Activated T-helper 2 cell treated with anti-CD3 and anti-CD28 coated beads, Interferon-gamma antibody, Interleukin-2, Interleukin-4, amounts not matched to agents 10 μg/mL and 5 μg/mL and 100 μg/mL, durations not matched to agents 14 hours and 24 hours and 36 hours (primary cell): ENCODE measurements at regions of chr10 and their contacts with region 1.

Region 1: DNA sequence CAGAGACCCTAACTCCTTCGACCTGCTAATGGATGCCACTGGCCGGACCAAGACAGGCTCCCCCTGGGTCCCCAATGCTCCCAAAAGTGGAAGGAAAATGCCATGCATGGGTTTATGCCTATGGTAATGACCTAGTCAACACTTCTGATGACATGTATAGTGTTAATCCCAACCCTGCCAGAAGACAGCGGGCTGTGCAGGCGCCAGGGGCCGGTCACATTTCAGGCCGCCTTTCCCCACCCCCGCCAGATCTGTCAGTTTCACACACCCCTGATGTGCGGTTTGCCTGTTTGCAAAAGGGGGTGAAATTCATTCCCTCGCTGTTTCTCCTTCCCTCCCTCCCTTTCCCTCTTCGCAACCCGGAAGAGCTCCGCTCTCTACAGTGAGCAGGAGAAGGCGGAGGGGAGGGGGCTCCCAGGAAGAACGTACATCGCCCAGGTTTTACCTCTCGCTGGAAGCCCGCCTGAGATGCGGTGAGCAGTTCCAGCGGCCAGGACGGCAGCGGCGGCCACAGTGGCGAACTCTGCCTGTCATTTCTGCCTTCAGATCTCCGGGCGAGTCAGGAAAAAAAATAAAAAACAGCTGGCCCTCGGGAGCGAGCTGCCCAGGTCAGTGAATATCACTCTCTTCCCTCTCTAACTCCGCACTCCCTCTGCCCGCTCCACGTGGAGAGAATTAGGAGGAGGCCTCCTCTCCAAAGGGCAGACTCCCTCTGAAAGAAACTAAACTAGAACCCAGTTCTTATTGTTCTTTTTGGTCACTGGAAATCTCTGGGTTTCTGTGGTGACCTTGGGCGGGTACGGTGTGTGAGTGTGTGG is 9.4 kb upstream of the GATA3 start:
- DNase-seq: no peak
- H3K4me3 Mint-ChIP-seq: peak overlapping the region; percentile 81
- H3K27ac Mint-ChIP-seq: peak overlapping the region; percentile 40
- H3K4me1 Mint-ChIP-seq: peaks cover 58% of the 10 kb centered on the region
- H3K27me3 Mint-ChIP-seq: peaks cover 41% of the 10 kb centered on the region

Region 2: DNA sequence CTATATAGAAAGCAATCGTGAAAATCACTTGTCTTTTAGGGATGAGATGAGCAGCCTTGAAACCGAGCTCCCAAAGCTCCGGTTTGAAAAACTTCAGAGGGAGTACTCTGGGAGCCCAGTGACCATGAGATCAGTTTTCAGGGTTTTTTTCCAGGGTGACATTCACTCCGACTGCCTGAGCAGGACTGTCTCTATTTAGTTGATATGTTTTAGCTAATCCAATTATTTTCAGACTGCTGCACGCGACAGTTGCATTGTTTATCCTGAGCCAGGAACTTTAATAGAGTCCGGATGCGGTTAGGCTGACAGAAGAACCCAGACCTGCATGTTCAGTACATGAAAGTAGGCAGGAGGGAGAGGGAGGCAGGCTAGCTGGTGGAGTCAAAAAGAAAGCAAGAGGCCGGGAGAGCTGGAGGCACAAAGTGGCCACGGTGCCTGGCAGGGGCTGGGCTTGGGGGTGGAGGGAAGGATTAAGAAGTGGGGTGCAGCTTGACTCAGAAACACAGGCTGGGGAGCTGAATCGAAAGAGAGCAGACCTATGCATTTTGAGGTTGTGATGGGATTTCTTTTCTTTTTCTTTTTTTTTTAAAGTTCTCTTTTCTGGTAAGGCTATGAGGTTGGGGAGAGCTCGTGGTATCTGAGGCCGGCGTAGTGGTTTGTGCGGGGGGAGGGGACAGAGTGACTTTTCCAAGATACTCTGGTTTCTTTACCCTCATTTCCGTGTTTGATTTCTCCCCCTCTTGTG is 15.0 kb after region 1 on chr10:
- intact Hi-C with region 1: loop called (anchors 1 kb)
- DNase-seq: peak; percentile 81
- H3K4me3 Mint-ChIP-seq: peak overlapping the region; percentile 92
- H3K27ac Mint-ChIP-seq: peak overlapping the region; percentile 94
- H3K4me1 Mint-ChIP-seq: peaks cover 50% of the 10 kb centered on the region
- H3K27me3 Mint-ChIP-seq: no peaks in the 10 kb centered on the region

Region 3: GRCh38 chr10:9024210-9024609 is 979.1 kb after region 1 on chr10:
- intact Hi-C with region 1: loop called (anchors 5 kb)
- DNase-seq: no peak
- H3K4me3 Mint-ChIP-seq: no peak overlapping the region
- H3K27ac Mint-ChIP-seq: peak overlapping the region; percentile 88
- H3K4me1 Mint-ChIP-seq: peaks cover 74% of the 10 kb centered on the region
- H3K27me3 Mint-ChIP-seq: no peaks in the 10 kb centered on the region

Region 4: GRCh38 chr10:9228771-9229170 is 1183.7 kb after region 1 on chr10:
- intact Hi-C with region 1: loop called (anchors 5 kb)
- DNase-seq: no peak
- H3K4me3 Mint-ChIP-seq: no peak overlapping the region
- H3K27ac Mint-ChIP-seq: no peak overlapping the region
- H3K4me1 Mint-ChIP-seq: peaks cover 41% of the 10 kb centered on the region
- H3K27me3 Mint-ChIP-seq: peaks cover 7% of the 10 kb centered on the region